ENCODE measurements at regions of chr11 and their contacts with region 1.

Region 1: GRCh38 chr11:108008656-108009496 is at the start of gene CUL5:
- DNase-seq: peak; percentile 85
- H3K4me3 Mint-ChIP-seq: peak within 1 kb of the TSS; percentile 97
- H3K27ac Mint-ChIP-seq: peak within 1 kb of the TSS; percentile 93
- H3K4me1 Mint-ChIP-seq: peaks cover 15% of the 10 kb centered on the region
- H3K27me3 Mint-ChIP-seq: no peaks in the 10 kb centered on the region
- total RNA-seq, gene CUL5: 37.0 and 41.3 TPM in 2 replicates

Region 2: DNA sequence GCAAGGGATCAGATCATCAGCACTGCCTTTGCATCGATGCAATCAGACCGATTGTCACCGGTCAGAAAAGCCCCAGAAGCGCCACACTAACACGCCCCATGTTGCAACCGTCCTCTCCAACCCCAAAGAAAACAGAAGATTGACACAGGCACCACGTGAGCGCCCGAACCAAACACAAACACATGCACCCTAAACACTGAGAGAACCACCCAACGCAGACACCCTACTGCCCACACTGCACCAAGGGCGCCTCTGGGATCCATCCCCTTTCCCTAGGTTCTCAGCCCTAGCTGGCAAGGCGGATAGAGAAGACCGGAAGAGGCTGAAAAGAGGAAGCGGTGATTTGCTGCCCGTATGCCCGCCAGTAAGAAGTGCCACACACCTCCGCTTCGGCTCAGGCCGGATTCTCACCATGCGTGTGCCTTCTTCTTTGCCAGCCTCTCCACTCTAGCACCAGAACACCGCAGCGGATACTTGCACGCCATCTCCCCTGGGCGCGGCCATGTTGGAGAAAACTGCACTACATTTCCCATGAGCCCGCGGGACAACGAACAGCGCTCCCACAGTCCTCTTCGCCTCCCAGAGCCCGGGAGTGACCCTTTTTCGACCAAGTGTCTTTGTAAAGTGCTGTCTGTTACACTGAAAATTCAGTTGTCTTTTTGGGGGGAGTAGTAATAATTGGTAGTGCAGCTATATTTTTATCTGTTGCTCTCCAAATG is 443.5 kb before region 1 on chr11 and contains the start of gene ALKBH8:
- intact Hi-C with region 1: loop called (anchors 5 kb)
- DNase-seq: peak; percentile 71
- H3K4me3 Mint-ChIP-seq: peak within 1 kb of the TSS; percentile 99
- H3K27ac Mint-ChIP-seq: peak within 1 kb of the TSS; percentile 98
- H3K4me1 Mint-ChIP-seq: peaks cover 52% of the 10 kb centered on the region
- H3K27me3 Mint-ChIP-seq: no peaks in the 10 kb centered on the region
- total RNA-seq, gene ALKBH8: 14.7 and 16.0 TPM in 2 replicates

Region 3: DNA sequence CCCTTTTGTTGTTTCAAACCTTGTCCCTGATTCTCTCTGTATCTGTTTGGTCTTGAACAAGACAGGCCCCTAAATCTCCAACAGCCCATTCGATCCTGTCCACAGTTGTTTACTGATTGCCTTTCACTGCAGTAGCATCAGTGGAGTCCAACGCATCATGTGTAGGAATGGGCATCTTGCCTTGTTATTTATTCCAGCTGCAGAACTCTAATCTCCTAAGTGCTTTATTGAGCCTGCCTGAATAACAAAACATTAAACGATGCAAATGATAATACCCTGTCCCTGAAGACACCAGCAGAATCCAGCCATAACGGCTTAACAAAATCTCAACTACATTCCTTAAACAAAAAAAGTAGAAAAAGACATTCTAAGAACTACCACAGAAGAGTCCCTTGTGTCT is 200.4 kb before region 1 on chr11:
- intact Hi-C with region 1: no loop called
- DNase-seq: no peak
- H3K4me3 Mint-ChIP-seq: no peak overlapping the region
- H3K27ac Mint-ChIP-seq: no peak overlapping the region
- H3K4me1 Mint-ChIP-seq: no peaks in the 10 kb centered on the region
- H3K27me3 Mint-ChIP-seq: no peaks in the 10 kb centered on the region

Region 4: DNA sequence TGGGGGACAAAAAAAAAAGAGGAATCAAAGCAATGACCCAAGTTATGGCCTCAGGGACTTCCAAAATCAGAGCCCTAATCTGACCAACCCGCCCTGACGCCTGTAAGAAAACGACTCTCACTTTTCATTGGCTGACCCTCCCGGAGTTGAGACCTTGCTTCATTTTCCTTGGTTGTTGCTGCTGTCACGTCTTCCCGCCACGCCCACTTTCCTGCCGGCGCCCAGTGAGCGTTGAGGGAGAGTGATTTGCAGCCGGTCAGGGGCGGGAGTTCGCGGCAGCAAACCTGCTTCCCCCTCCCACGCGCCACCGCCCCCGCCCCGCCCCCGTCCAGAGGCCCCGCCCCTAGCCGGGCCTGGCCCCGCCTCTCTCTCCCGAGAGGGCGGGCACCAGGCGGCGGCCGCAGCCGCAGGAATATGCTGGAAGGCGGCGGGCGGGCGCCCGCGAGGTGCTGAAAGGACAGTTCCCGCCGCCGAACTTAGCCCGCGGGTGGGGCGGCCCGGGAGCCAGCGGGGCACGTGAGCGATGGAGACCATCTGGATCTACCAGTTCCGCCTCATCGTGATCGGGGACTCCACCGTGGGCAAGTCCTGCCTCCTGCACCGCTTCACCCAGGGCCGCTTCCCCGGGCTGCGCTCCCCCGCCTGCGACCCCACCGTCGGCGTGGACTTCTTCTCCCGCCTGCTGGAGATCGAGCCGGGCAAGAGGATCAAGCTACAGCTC is 80.7 kb before region 1 on chr11 and contains the start of gene RAB39A:
- intact Hi-C with region 1: loop called (anchors 1 kb)
- DNase-seq: peak; percentile 71
- H3K4me3 Mint-ChIP-seq: peak within 1 kb of the TSS; percentile 71
- H3K27ac Mint-ChIP-seq: no peak within 1 kb of the TSS
- H3K4me1 Mint-ChIP-seq: peaks cover 6% of the 10 kb centered on the region
- H3K27me3 Mint-ChIP-seq: peaks cover 25% of the 10 kb centered on the region
- total RNA-seq, gene RAB39A: not detected in 2 replicates

Region 5: DNA sequence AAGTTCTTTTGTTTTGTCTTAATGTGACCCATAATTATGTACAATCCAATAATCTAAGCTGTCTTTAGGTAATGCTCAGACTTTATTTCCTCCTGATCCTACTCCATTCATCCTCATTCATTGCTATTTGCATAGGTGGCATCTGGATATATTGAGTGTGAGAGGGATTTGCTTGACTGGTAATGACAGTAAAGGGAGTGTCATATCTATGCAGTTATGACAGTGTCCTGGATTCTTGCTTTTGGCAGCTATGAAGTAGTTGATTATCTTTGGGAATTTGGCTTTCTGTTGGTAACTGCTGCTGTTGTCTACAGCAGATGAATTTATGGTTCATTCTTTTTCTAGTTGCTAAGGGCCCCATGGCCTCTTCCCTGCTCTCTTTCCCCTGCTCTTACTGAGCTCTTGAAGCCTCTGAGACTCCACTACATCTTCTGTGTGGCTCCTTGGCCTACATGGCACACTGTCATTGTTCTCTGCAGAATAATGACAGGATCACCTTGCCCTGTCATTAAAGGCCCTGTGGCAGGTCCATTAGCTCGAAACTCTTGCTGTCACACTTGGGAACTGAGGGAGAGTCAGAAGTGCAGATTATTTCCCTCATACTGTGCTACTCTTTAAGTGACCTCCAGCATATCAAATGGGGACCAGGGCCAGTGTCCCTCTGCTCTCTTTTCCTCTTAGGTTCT is 92.4 kb after region 1 on chr11:
- intact Hi-C with region 1: no loop called
- DNase-seq: no peak
- H3K4me3 Mint-ChIP-seq: no peak overlapping the region
- H3K27ac Mint-ChIP-seq: no peak overlapping the region
- H3K4me1 Mint-ChIP-seq: no peaks in the 10 kb centered on the region
- H3K27me3 Mint-ChIP-seq: no peaks in the 10 kb centered on the region

Region 6: GRCh38 chr11:108121274-108122155 is 112.6 kb after region 1 on chr11 and contains the start of gene ACAT1:
- intact Hi-C with region 1: loop called (anchors 1 kb)
- DNase-seq: peak; percentile 95
- H3K4me3 Mint-ChIP-seq: peak within 1 kb of the TSS; percentile 97
- H3K27ac Mint-ChIP-seq: peak within 1 kb of the TSS; percentile 82
- H3K4me1 Mint-ChIP-seq: peaks cover 36% of the 10 kb centered on the region
- H3K27me3 Mint-ChIP-seq: no peaks in the 10 kb centered on the region
- total RNA-seq, gene ACAT1: 52.8 and 56.8 TPM in 2 replicates

Region 7: GRCh38 chr11:108497317-108498045 is 488.6 kb after region 1 on chr11:
- intact Hi-C with region 1: loop called (anchors 10 kb)
- DNase-seq: peak; percentile 61
- H3K4me3 Mint-ChIP-seq: peak overlapping the region; percentile 90
- H3K27ac Mint-ChIP-seq: peak overlapping the region; percentile 96
- H3K4me1 Mint-ChIP-seq: peaks cover 35% of the 10 kb centered on the region
- H3K27me3 Mint-ChIP-seq: no peaks in the 10 kb centered on the region

Region 8: GRCh38 chr11:108664730-108665525 is 656.1 kb after region 1 on chr11 and contains the start of gene DDX10:
- intact Hi-C with region 1: loop called (anchors 1 kb)
- DNase-seq: peak; percentile 98
- H3K4me3 Mint-ChIP-seq: peak within 1 kb of the TSS; percentile 100
- H3K27ac Mint-ChIP-seq: peak within 1 kb of the TSS; percentile 97
- H3K4me1 Mint-ChIP-seq: peaks cover 45% of the 10 kb centered on the region
- H3K27me3 Mint-ChIP-seq: peaks cover 7% of the 10 kb centered on the region
- total RNA-seq, gene DDX10: 68.4 and 68.8 TPM in 2 replicates

Measured in activated T-helper 1 cell treated with anti-CD3 and anti-CD28 coated beads, Interleukin-12 subunit alpha, Interleukin-12 subunit beta, Interleukin-2, Interleukin-4 antibody, amounts not matched to agents 30 ng/mL and 10 ng/mL and 1 ng/mL, durations not matched to agents 14 hours and 24 hours and 36 hours (primary cell).